ENCODE measurements at regions of chr10 and their contacts with region 1.

Region 1: GRCh38 chr10:28807760-28808613 is 130.7 kb downstream of the BAMBI start:
- DNase-seq: no peak
- ATAC-seq: peak; percentile 22 to 56 (median 44)
- H3K4me3 ChIP-seq: peak overlapping the region in 4 of 10 donors; percentile 3 to 30 (median 24)
- H3K27ac ChIP-seq: peak overlapping the region in 9 of 10 donors; percentile 67 to 87 (median 84)
- H3K4me1 ChIP-seq: peaks cover 3 to 31% (median 12%) of the 10 kb centered on the region in 9 donors
- H3K27me3 ChIP-seq: no peaks in the 10 kb centered on the region
- CTCF ChIP-seq: no peak

Region 2: DNA sequence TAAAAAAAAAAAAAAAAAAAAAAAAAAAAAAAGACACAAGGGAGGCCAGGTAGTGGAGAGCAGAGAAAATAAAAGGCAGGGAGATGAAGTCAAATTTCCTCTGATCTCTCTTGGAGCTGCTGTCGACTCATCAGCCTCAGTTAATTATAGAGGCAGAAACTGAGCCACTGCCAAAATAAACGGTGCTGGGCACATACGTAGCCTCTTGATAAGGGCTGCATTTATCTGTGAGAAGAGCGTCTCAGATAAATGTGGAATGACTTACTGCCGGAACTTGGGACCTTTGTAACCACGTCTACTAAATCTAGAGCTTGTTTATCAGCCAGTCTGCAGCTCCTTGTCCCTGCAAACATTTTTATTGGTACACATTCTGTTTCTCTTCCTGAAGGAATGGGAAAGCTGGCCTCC is 31.6 kb after region 1 on chr10:
- intact Hi-C with region 1: loop called in 1 of 10 experiments (anchors 2 kb)
- DNase-seq: peak in 1 of 2 donors; percentile 59
- ATAC-seq: peak; percentile 48 to 96 (median 92)
- H3K4me3 ChIP-seq: no peak overlapping the region
- H3K27ac ChIP-seq: peak overlapping the region; percentile 39 to 78 (median 56)
- H3K4me1 ChIP-seq: peaks cover 0 to 46% (median 18%) of the 10 kb centered on the region in 9 donors
- H3K27me3 ChIP-seq: no peaks in the 10 kb centered on the region
- CTCF ChIP-seq: no peak

Region 3: GRCh38 chr10:28892816-28893547 is 85.0 kb after region 1 on chr10:
- intact Hi-C with region 1: loop called in 1 of 10 experiments (anchors 10 kb)
- DNase-seq: no peak
- ATAC-seq: no peak
- H3K4me3 ChIP-seq: no peak overlapping the region
- H3K27ac ChIP-seq: no peak overlapping the region
- H3K4me1 ChIP-seq: peaks cover 0 to 10% (median 4%) of the 10 kb centered on the region in 9 donors
- H3K27me3 ChIP-seq: no peaks in the 10 kb centered on the region
- CTCF ChIP-seq: no peak

Measured in heart right ventricle (tissue), 16 donors.